ENCODE measurements at regions of chr5 and their contacts with region 1.

Region 1: DNA sequence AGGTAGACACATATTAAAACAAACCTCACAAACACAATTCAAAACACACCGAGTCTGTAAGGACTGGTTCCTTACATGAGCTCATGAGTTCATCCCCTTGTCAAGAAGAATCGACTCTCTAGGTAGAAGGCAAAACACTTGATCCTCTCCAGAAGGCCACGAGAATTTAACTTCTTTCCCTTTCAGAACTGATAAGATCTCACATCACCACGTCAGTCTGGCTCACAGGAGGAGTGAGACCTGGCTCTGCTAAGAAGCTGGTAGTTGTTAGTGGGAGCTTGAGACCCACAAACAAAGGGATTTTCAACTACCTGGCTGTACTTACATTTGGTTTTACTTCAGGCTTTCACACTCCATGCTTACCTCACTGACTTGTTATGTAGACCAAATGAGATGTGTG is 459.2 kb downstream of the ARHGEF28 start:
- DNase-seq: no peak
- H3K4me3 ChIP-seq: no peak overlapping the region
- H3K4me3 Mint-ChIP-seq: no peak overlapping the region
- H3K27ac Mint-ChIP-seq: no peak overlapping the region
- H3K4me1 ChIP-seq: no peaks in the 10 kb centered on the region
- H3K4me1 Mint-ChIP-seq: no peaks in the 10 kb centered on the region
- H3K27me3 ChIP-seq: no peaks in the 10 kb centered on the region
- H3K27me3 Mint-ChIP-seq: no peaks in the 10 kb centered on the region
- CTCF ChIP-seq: no peak

Region 2: GRCh38 chr5:74073257-74073656 is 11.9 kb before region 1 on chr5:
- CTCF ChIA-PET with region 1: no interaction called
- POLR2A ChIA-PET with region 1: interaction called, 10 read pairs
- intact Hi-C with region 1: no loop called
- DNase-seq: no peak
- H3K4me3 ChIP-seq: no peak overlapping the region
- H3K4me3 Mint-ChIP-seq: no peak overlapping the region
- H3K27ac Mint-ChIP-seq: no peak overlapping the region
- H3K4me1 ChIP-seq: peaks cover 20% of the 10 kb centered on the region
- H3K4me1 Mint-ChIP-seq: peaks cover 7% of the 10 kb centered on the region
- H3K27me3 ChIP-seq: no peaks in the 10 kb centered on the region
- H3K27me3 Mint-ChIP-seq: no peaks in the 10 kb centered on the region
- CTCF ChIP-seq: no peak

Region 3: GRCh38 chr5:74112372-74113195 is 27.4 kb after region 1 on chr5:
- CTCF ChIA-PET with region 1: no interaction called
- POLR2A ChIA-PET with region 1: no interaction called
- intact Hi-C with region 1: no loop called
- DNase-seq: no peak
- H3K4me3 ChIP-seq: no peak overlapping the region
- H3K4me3 Mint-ChIP-seq: no peak overlapping the region
- H3K27ac Mint-ChIP-seq: no peak overlapping the region
- H3K4me1 ChIP-seq: no peaks in the 10 kb centered on the region
- H3K4me1 Mint-ChIP-seq: peaks cover 10% of the 10 kb centered on the region
- H3K27me3 ChIP-seq: no peaks in the 10 kb centered on the region
- H3K27me3 Mint-ChIP-seq: no peaks in the 10 kb centered on the region
- CTCF ChIP-seq: no peak

Measured in Caco-2 (cell line).